Activated CD4-positive, alpha-beta memory T cell treated with anti-CD3 and anti-CD28 coated beads for 36 hours (primary cell): ENCODE measurements at regions of chr1 and their contacts with region 1.

Region 1: GRCh38 chr1:40691538-40692428 is at the start of gene NFYC:
- DNase-seq: peak; percentile 98
- H3K4me3 Mint-ChIP-seq: peak within 1 kb of the TSS; percentile 90
- H3K27ac Mint-ChIP-seq: peak within 1 kb of the TSS; percentile 90
- H3K4me1 Mint-ChIP-seq: peaks cover 59% of the 10 kb centered on the region
- H3K27me3 Mint-ChIP-seq: no peaks in the 10 kb centered on the region
- total RNA-seq, gene NFYC: 52.6 to 61.7 TPM

Region 2: DNA sequence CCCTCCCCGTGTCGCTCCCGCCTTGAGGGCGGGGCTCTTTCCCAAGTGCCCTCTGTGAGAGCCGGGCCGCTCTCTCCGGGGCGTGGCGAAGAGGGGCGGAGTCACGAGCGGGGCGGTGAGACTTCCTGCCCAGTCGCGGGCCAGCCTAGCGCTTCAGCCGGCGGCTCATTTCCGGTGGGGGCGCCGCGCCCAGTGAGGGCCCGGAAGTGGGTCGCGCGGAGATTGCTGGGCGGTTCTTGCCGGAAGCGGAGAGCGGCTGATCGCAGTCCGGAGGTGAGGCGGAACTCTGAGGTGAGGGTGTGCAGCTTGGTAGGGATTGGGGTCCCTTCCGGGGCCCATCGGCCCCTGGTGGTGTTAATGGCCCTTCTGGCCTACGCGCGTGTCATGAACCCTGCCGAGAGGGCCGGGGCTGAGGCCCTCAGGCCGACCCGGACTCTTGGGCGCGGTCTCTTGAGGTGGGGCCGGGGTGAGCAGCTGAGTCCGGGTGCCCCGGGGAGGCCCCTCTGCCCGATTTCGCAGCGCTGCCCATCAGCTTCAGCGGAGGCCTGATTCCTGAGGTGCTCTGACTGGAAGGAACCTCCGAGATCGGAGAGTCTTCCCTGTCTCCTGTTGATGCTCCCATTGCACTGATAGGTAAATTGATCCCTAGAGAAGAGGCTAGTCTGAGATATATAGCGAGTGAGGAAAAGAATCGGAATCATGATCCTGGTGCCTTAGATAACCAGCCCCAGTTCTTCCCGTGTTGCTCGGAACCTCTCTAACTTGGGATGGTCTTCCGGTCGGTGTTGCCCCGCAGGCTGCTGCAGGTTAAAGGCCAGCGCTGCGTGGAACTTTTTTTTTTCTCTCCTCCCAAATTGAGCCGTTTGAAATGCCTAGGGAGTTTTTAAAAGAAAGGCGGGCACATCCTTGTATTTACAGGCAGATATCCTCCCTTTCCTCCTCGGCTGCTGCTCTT is 651.0 kb before region 1 on chr1 and contains the start of gene CAP1:
- CTCF ChIA-PET with region 1: no interaction called
- POLR2A ChIA-PET with region 1: no interaction called
- intact Hi-C with region 1: loop called (anchors 1 kb)
- DNase-seq: peak; percentile 100
- H3K4me3 Mint-ChIP-seq: peak within 1 kb of the TSS; percentile 92
- H3K27ac Mint-ChIP-seq: peak within 1 kb of the TSS; percentile 98
- H3K4me1 Mint-ChIP-seq: peaks cover 54% of the 10 kb centered on the region
- H3K27me3 Mint-ChIP-seq: no peaks in the 10 kb centered on the region
- total RNA-seq, gene CAP1: 616 to 633 TPM

Region 3: GRCh38 chr1:40449684-40450494 is 241.9 kb before region 1 on chr1 and contains the start of gene ZFP69B:
- CTCF ChIA-PET with region 1: no interaction called
- POLR2A ChIA-PET with region 1: interaction called, 3 read pairs
- intact Hi-C with region 1: loop called (anchors 10 kb)
- DNase-seq: peak; percentile 94
- H3K4me3 Mint-ChIP-seq: peak within 1 kb of the TSS; percentile 78
- H3K27ac Mint-ChIP-seq: peak within 1 kb of the TSS; percentile 97
- H3K4me1 Mint-ChIP-seq: peaks cover 32% of the 10 kb centered on the region
- H3K27me3 Mint-ChIP-seq: no peaks in the 10 kb centered on the region
- total RNA-seq, gene ZFP69B: 4.8 to 5.7 TPM

Region 4: DNA sequence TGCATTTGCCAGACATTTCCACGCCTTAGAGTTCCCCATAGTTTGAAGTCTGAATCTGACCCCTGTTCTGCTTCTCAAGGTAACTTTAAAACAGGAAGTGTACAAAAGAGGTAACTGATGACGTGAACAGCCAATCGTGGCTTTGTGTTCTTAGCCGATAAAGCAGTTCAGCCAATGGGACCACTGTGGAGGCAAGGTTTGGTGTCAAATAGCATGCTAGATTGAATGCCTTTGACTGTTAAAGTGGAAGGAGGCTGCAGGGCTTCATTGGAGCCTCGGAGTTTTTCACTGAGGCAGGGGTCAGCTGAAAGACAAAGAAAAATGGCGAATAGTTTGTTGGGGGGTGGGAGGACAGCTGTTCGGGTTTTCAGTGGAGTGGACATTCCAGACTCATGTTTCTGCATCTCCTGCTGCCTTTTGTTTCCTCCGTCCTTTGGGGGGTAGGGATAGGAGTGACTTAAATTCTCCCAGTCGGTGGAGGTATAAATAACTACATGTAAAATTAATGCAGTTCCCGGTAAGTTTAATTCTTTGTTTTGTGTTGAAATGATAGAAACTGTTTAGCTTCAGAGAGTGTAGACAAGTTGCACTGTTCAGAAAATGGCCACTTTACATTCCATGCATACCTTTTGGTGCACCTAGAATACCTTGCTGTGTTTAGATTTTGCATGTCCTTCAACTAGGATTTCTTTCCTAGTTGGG is 17.5 kb after region 1 on chr1:
- CTCF ChIA-PET with region 1: interaction called, 3 read pairs
- POLR2A ChIA-PET with region 1: interaction called, 7 read pairs
- intact Hi-C with region 1: loop called (anchors 1 kb)
- DNase-seq: peak; percentile 79
- H3K4me3 Mint-ChIP-seq: peak overlapping the region; percentile 87
- H3K27ac Mint-ChIP-seq: peak overlapping the region; percentile 89
- H3K4me1 Mint-ChIP-seq: peaks cover 63% of the 10 kb centered on the region
- H3K27me3 Mint-ChIP-seq: no peaks in the 10 kb centered on the region

Region 5: GRCh38 chr1:40755067-40755466 is 63.3 kb after region 1 on chr1:
- CTCF ChIA-PET with region 1: no interaction called
- POLR2A ChIA-PET with region 1: interaction called, 7 read pairs
- intact Hi-C with region 1: loop called (anchors 1 kb)
- DNase-seq: no peak
- H3K4me3 Mint-ChIP-seq: no peak overlapping the region
- H3K27ac Mint-ChIP-seq: no peak overlapping the region
- H3K4me1 Mint-ChIP-seq: peaks cover 25% of the 10 kb centered on the region
- H3K27me3 Mint-ChIP-seq: no peaks in the 10 kb centered on the region

Region 6: DNA sequence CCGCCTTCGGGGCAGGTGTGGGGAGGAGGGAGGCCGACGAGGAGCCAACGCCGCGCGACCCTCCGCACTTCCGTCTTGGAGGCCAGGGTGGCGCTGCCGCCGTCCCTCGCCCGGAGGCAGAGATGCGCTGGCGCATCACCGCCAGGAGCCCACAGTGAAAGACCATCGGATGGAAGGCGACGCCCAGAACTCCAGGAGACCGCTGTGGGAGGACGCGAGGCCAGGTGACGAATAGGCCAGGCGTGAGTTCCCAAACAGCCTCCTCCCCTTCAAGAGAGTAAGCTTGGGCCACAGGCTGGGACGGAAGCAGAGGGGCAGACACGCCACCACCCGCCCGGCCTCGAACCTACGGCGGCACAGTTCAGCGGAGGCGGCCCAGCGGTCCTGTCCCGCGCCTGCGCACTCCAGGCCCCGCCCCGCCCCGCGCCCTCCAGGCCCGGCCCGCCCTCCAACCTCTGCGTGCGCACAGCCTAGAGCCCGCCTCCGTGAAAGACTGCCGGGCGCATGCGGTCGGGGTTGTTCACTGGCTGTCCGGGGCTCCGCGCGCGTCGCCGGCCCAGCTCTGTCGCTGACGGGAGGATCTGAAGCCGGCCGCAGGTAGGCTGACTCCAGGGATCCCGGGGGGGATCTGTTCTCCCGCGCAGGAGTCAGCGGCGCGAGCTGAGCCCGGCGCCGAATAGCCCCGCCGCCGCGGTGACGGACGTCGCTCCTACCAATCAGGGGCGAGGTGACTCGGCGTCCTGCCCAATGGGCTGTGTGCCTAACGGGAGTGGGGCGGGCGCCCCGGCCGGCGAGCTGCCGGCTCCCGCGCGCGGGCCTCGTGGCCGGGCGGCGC is 287.7 kb after region 1 on chr1 and contains the start of gene CTPS1:
- CTCF ChIA-PET with region 1: no interaction called
- POLR2A ChIA-PET with region 1: interaction called, 14 read pairs
- intact Hi-C with region 1: loop called (anchors 5 kb)
- DNase-seq: peak; percentile 97
- H3K4me3 Mint-ChIP-seq: peak within 1 kb of the TSS; percentile 81
- H3K27ac Mint-ChIP-seq: peak within 1 kb of the TSS; percentile 89
- H3K4me1 Mint-ChIP-seq: peaks cover 43% of the 10 kb centered on the region
- H3K27me3 Mint-ChIP-seq: no peaks in the 10 kb centered on the region
- total RNA-seq, gene CTPS1: 78.0 to 78.5 TPM